ENCODE measurements at regions of chr17 and their contacts with region 1.

Region 1: DNA sequence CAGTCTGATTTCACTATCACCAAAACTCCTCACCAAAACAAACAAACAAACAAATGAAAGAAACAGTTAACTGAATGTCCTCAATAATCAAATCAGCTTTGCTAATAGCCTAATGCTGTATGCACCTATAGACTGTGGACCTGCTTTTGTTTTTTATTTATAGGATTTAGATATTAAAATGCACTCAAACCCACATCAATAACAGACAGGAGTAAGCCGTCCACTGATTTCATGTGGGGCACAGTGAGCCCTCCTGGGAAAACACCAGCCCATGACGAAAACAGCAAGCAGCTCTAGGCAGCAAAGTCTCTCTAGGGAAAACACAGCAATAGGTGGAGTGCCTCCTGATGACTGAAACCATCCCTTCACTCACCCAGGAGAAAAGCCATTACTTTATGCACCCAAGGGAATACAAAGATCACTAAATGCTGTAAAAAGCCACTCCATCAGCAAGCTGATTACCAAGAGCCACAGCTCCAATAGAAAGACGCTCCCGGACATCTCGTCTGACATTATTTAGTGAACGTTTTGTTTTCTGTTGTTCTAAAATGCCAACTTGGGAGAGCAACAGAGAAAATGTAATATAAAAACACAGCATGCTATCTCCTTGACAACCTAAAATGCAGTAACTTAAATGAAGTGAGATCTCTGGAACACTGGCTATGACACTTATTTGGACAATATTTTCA is 47.8 kb downstream of the ANKFY1 start:
- DNase-seq: no peak
- ATAC-seq: no peak
- H3K4me3 ChIP-seq: no peak overlapping the region
- H3K27ac ChIP-seq: no peak overlapping the region
- H3K4me1 ChIP-seq: no peaks in the 10 kb centered on the region
- H3K27me3 ChIP-seq: no peaks in the 10 kb centered on the region

Region 2: GRCh38 chr17:4249452-4250029 is 33.5 kb after region 1 on chr17:
- intact Hi-C with region 1: loop called in 1 of 2 experiments (anchors 2 kb)
- DNase-seq: no peak
- ATAC-seq: no peak
- H3K4me3 ChIP-seq: no peak overlapping the region
- H3K27ac ChIP-seq: peak overlapping the region; percentile 67 to 69
- H3K4me1 ChIP-seq: peaks cover 1 to 7% of the 10 kb centered on the region in 2 donors
- H3K27me3 ChIP-seq: no peaks in the 10 kb centered on the region

Region 3: GRCh38 chr17:4263282-4264215 is 47.5 kb after region 1 on chr17 and contains the start of gene ANKFY1:
- intact Hi-C with region 1: loop called (anchors 2 to 5 kb)
- DNase-seq: peak; percentile 98 to 100
- ATAC-seq: peak; percentile 98
- H3K4me3 ChIP-seq: peak within 1 kb of the TSS; percentile 87 to 91
- H3K27ac ChIP-seq: peak within 1 kb of the TSS in 1 of 2 donors; percentile 39
- H3K4me1 ChIP-seq: peaks cover 0 to 2% of the 10 kb centered on the region in 2 donors
- H3K27me3 ChIP-seq: no peaks in the 10 kb centered on the region
- total RNA-seq, gene ANKFY1: 58.0 to 71.6 TPM

Region 4: GRCh38 chr17:4304417-4305027 is 88.5 kb after region 1 on chr17:
- intact Hi-C with region 1: loop called (anchors 2 to 5 kb)
- DNase-seq: peak in 1 of 2 donors; percentile 47
- ATAC-seq: peak; percentile 70
- H3K4me3 ChIP-seq: no peak overlapping the region
- H3K27ac ChIP-seq: no peak overlapping the region
- H3K4me1 ChIP-seq: no peaks in the 10 kb centered on the region
- H3K27me3 ChIP-seq: no peaks in the 10 kb centered on the region

Region 5: GRCh38 chr17:4412933-4413831 is 197.2 kb after region 1 on chr17:
- intact Hi-C with region 1: loop called (anchors 1 kb)
- DNase-seq: peak; percentile 95 to 99
- ATAC-seq: peak; percentile 95
- H3K4me3 ChIP-seq: no peak overlapping the region
- H3K27ac ChIP-seq: no peak overlapping the region
- H3K4me1 ChIP-seq: no peaks in the 10 kb centered on the region
- H3K27me3 ChIP-seq: no peaks in the 10 kb centered on the region

Region 6: DNA sequence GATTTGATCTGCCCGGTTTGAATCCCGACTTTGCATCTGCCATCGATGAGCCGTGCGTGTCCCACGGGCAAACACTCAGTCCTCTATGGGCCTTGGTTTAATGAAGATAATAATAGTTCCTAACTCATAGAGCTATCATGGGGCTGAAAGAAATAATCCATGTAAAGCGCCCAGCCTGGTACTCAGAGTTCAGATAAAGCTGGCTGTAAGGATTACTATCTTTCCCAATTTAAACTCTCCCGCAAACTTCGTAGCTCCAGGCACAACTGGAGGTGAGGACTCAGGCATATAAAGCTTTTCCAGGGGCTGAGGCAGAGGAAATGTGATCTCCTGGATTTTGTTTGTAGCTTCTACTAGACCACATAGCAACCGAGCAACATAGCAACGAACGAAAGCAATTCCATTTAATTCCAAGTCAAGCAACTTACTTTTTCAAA is 409.2 kb after region 1 on chr17:
- intact Hi-C with region 1: loop called in 1 of 2 experiments (anchors 10 kb)
- DNase-seq: no peak
- ATAC-seq: no peak
- H3K4me3 ChIP-seq: no peak overlapping the region
- H3K27ac ChIP-seq: no peak overlapping the region
- H3K4me1 ChIP-seq: no peaks in the 10 kb centered on the region
- H3K27me3 ChIP-seq: no peaks in the 10 kb centered on the region